ENCODE measurements at regions of chr5 and their contacts with region 1.

Region 1: DNA sequence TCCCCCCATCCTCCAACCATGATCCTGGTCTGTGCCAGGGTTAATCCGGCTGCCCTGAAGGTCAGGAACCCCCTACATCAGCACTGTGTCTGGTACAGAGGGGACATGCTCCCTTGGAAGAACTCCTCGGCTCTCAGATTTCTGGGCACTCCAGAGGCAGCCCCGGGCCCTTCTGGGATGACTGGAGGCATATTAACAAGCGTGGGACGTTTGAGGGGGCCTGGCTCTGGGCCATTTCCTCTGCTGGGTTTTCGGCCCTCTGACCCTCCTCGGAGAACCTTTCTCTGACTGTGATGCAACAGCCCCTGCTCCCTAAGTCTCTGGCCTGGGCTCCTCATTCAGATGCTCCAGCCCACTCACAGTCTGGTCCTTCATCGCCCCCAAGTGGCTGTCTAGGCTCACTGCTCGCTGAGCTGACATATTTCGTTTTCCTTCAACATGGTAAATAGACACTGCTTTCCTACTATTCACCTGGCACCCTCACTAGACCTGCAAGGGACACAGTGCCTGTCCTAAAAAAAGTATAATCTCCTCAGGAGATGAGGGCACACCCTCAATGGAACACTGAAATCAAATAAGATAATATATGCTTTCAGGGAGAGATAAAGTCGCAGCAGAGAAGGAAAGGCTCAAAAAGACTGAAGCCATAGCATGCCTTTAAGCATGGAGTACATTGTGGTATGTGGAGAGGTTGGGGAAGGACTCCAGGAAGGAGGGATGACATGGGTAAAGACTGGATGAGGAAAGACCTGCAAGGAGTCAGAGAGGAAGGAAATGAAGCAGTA is 404.7 kb upstream of the TRPC7 start:
- DNase-seq: peak; percentile 56 to 81 (median 70)
- H3K4me3 ChIP-seq: no peak overlapping the region
- H3K27ac ChIP-seq: no peak overlapping the region
- H3K27me3 ChIP-seq: peaks cover 0 to 5% (median 0%) of the 10 kb centered on the region in 45 donors
- CTCF ChIP-seq: peak; percentile 60 to 92 (median 79)

Region 2: GRCh38 chr5:136249678-136250266 is 520.3 kb before region 1 on chr5:
- intact Hi-C with region 1: loop called (anchors 2 kb)
- DNase-seq: peak; percentile 52 to 77 (median 69)
- H3K4me3 ChIP-seq: no peak overlapping the region
- H3K27ac ChIP-seq: no peak overlapping the region
- H3K27me3 ChIP-seq: peaks cover 0 to 8% (median 0%) of the 10 kb centered on the region in 45 donors
- CTCF ChIP-seq: peak; percentile 51 to 94 (median 82)

Region 3: DNA sequence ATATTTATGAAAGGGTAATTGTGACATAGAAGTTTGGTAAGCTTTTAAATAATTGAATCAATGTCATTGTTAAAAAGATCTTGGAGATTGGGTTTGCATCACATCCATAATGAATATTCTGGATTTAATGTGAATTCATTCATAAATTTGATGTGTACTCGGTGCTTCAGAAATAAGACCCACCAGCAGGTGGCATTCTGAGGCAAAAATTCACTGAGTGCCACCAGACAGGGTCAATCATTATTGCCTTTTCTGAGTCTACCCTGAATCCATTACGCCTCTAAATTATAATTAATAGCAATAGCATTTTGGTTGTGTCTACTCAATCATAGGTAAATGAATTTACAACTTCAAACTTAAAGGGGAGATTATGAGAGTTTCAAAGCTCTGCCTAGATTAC is 405.8 kb before region 1 on chr5:
- intact Hi-C with region 1: loop called in 1 of 2 experiments (anchors 10 kb)
- DNase-seq: peak in 1 of 10 donors; percentile 15
- H3K4me3 ChIP-seq: no peak overlapping the region
- H3K27ac ChIP-seq: no peak overlapping the region
- H3K27me3 ChIP-seq: peaks cover 0 to 38% (median 10%) of the 10 kb centered on the region in 45 donors
- CTCF ChIP-seq: peak in 52 of 56 donors; percentile 23 to 66 (median 48)

Region 4: GRCh38 chr5:136374003-136374402 is 396.1 kb before region 1 on chr5:
- intact Hi-C with region 1: loop called (anchors 5 to 10 kb)
- DNase-seq: no peak
- H3K4me3 ChIP-seq: no peak overlapping the region
- H3K27ac ChIP-seq: no peak overlapping the region
- H3K27me3 ChIP-seq: peaks cover 0 to 40% (median 7%) of the 10 kb centered on the region in 45 donors
- CTCF ChIP-seq: peak in 18 of 56 donors; percentile 10 to 43 (median 19)

Region 5: GRCh38 chr5:136491806-136492205 is 278.3 kb before region 1 on chr5:
- intact Hi-C with region 1: no loop called
- DNase-seq: no peak
- H3K4me3 ChIP-seq: no peak overlapping the region
- H3K27ac ChIP-seq: no peak overlapping the region
- H3K27me3 ChIP-seq: peaks cover 0 to under 1% (median 0%) of the 10 kb centered on the region in 45 donors
- CTCF ChIP-seq: no peak

Measured in dorsolateral prefrontal cortex (tissue), 120 donors.